ENCODE measurements at regions of chr20 and their contacts with region 1.

Region 1: GRCh38 chr20:50680412-50680908 is 10.9 kb downstream of the RIPOR3 start:
- DNase-seq: peak; percentile 69 to 86
- H3K4me3 ChIP-seq: peak overlapping the region; percentile 30; the same call in 1 of the 2 replicates
- H3K27ac ChIP-seq: peak overlapping the region; percentile 80
- H3K4me1 ChIP-seq: peaks cover 57% of the 10 kb centered on the region
- H3K27me3 ChIP-seq: no peaks in the 10 kb centered on the region
- CTCF ChIP-seq: no peak

Region 2: DNA sequence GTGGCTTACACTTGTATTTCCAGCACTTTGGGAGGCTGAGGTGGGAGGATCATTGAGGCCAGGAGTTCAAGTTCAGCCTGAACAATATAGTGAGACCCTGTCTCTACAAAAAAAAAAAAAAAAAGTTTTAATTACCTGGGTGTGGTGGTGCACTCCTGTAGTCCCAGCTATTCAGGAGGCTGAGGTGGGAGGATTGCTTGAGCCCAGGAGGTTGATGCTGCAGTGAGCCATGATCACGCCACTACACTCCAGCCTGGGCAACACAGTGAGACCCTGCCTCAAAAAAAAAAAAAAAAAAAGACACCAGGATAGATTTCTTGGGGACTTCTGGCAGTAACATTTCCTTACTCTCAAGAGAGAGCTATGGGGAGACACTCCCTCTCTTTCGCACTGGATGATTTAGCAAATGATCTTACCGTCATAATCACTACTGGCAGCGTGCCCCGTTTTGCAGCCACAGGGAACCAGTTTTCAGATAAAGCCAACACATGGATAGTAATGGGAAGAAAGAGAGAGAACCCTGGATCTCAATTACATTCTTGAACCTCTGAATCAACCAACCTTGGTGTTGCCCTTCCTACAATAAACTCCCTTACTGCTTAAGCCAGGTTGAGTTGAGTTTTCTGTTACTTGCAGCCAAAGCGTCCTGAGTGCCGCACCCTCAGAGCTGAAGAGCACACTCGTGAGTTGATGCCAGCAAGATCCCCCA is 188.4 kb before region 1 on chr20:
- CTCF ChIA-PET with region 1: interaction called, 6 read pairs
- POLR2A ChIA-PET with region 1: interaction called, 19 read pairs
- intact Hi-C with region 1: no loop called
- DNase-seq: peak; percentile 36 to 58
- H3K4me3 ChIP-seq: no peak overlapping the region
- H3K27ac ChIP-seq: peak overlapping the region; percentile 88
- H3K4me1 ChIP-seq: peaks cover 29% of the 10 kb centered on the region
- H3K27me3 ChIP-seq: no peaks in the 10 kb centered on the region
- CTCF ChIP-seq: no peak

Region 3: DNA sequence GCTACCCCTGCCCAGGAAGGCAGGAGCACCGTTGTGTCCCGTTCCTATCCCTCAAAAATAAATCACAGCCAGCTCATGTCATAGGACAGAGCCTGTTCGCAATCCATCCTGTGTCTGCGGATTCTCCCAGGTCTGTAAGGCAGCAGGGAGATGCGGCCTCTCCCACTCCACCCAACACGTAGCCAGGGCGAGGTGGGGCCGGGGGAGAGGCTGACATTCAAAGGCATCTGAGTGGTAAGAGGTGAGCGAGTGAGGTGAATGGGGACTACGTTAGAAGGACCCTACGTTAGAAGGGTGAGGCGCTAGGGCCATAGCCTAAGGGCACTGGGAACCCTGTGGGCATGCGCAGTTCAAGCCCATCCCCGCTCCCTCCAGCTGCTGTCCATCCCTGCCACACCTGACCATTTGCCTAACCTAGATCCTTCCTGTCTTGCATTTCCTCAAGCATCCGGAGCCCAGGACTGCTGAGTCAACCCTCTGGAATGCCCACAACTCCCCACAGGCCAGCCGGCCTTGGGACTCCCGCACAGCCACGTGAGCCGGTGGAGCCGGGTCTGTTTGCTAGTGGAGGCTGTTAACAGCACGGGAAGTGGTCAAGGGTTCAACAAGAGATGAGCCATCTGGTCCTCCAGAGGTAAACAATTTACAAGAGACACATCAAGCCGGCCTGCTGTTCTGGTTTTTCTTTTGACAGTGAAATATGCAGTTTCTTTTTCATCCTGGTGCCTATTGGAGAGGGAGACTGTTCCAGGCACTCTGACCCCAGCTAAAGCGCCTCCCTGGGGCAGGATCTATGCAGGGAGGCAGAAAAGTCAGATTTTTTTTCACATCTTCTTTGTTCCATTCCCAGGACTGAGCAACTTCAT is 35.0 kb before region 1 on chr20:
- CTCF ChIA-PET with region 1: no interaction called
- POLR2A ChIA-PET with region 1: interaction called, 14 read pairs
- intact Hi-C with region 1: loop called (anchors 1 kb)
- DNase-seq: peak; percentile 97 to 100
- H3K4me3 ChIP-seq: peak overlapping the region; percentile 16; the same call in 1 of the 2 replicates
- H3K27ac ChIP-seq: peak overlapping the region; percentile 86
- H3K4me1 ChIP-seq: peaks cover 62% of the 10 kb centered on the region
- H3K27me3 ChIP-seq: no peaks in the 10 kb centered on the region
- CTCF ChIP-seq: no peak

Region 4: GRCh38 chr20:50690634-50691572 is 10.4 kb after region 1 on chr20 and contains the start of gene RIPOR3:
- CTCF ChIA-PET with region 1: interaction called, 3 read pairs
- POLR2A ChIA-PET with region 1: no interaction called
- intact Hi-C with region 1: loop called (anchors 1 kb)
- DNase-seq: peak in 1 of 2 experiments; percentile 28
- H3K4me3 ChIP-seq: no peak within 1 kb of the TSS
- H3K27ac ChIP-seq: no peak within 1 kb of the TSS
- H3K4me1 ChIP-seq: peaks cover 28% of the 10 kb centered on the region
- H3K27me3 ChIP-seq: no peaks in the 10 kb centered on the region
- CTCF ChIP-seq: no peak
- total RNA-seq, gene RIPOR3: 4.1 and 6.3 TPM in 2 replicates

Region 5: DNA sequence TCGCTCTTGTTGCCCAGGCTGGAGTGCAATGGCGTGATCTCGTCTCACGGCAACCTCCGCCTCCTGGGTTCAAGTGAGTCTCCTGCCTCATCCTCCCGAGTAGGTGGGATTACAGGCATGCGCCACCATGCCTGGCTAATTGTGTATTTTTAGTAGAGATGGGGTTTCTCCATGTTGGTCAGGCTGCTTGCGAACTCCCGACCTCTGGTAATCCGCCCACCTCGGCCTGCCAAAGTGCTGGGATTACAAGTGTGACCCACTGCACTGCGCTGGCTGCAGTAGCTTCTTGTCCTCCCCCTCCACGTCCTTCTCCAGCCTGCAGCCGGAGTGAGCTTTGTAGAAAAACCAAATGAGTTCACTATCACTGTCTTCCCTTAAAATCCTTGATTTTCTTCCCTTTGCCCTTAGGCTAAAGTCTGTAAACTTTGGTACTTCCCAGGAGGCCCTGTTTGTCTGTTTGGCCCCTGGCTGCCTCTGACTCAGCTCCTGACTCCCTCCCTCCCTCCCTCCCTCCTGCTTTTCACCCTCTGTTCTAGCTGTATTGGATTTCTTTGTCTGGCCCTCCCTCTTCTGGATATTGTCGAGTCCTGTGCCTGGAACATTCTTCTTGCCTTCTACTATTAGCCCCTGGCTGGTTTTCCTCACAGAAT is 63.8 kb after region 1 on chr20:
- CTCF ChIA-PET with region 1: interaction called, 8 read pairs
- POLR2A ChIA-PET with region 1: interaction called, 19 read pairs
- intact Hi-C with region 1: loop called (anchors 1 kb)
- DNase-seq: peak; percentile 72 to 83
- H3K4me3 ChIP-seq: no peak overlapping the region
- H3K27ac ChIP-seq: peak overlapping the region; percentile 76
- H3K4me1 ChIP-seq: peaks cover 94% of the 10 kb centered on the region
- H3K27me3 ChIP-seq: no peaks in the 10 kb centered on the region
- CTCF ChIP-seq: peak; percentile 68

Region 6: DNA sequence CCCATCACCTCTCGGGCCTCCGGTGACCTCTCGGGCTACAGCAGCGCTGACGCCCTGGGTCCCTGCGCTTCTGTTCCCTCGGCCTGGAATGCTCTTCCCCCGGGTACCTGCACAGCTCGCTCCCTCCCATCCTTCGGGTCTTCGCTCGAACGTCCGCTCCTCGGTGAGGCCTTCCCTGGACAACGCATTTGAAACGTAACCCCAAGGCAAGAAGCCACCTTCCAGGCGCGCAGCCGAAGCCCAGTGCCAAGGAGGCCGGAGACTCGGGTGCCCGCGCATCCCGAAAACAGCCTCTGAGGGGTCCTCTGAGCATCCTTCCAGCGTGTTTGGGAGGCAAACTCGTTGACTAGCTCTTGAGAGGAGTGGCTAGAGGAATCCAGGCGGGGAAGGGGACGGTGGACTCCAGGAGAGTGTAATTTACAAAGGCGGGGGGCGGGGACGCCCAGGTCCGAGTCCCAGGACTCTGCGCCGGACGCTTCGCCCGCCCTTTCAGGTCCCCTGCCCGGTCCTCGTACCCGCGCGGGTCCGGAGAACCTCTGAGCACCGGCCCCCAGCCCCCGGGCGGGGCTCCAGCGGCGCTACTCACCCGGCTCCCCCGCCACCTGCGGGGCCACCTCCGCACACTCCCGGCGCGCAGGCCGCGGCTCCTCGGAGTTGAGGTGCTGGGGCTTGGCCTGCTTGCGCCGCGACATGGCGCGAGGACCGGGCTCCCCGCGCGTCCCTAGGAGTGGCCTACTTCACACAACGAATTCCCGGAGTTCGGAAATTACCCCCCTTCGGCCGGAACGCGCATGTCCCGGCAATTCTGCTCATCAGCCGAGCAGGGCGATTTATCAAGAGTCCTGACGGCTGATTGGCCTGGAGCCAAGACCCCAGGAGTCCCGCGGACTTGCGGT is 1424.3 kb after region 1 on chr20:
- CTCF ChIA-PET with region 1: no interaction called
- POLR2A ChIA-PET with region 1: interaction called, 15 read pairs
- intact Hi-C with region 1: no loop called
- DNase-seq: peak; percentile 62 to 65
- H3K4me3 ChIP-seq: peak overlapping the region; percentile 81
- H3K27ac ChIP-seq: peak overlapping the region; percentile 71
- H3K4me1 ChIP-seq: peaks cover 19% of the 10 kb centered on the region
- H3K27me3 ChIP-seq: no peaks in the 10 kb centered on the region
- CTCF ChIP-seq: no peak